Cardiac septum (tissue), 1 donor: ENCODE measurements at regions of chr15 and their contacts with region 1.

Region 1: DNA sequence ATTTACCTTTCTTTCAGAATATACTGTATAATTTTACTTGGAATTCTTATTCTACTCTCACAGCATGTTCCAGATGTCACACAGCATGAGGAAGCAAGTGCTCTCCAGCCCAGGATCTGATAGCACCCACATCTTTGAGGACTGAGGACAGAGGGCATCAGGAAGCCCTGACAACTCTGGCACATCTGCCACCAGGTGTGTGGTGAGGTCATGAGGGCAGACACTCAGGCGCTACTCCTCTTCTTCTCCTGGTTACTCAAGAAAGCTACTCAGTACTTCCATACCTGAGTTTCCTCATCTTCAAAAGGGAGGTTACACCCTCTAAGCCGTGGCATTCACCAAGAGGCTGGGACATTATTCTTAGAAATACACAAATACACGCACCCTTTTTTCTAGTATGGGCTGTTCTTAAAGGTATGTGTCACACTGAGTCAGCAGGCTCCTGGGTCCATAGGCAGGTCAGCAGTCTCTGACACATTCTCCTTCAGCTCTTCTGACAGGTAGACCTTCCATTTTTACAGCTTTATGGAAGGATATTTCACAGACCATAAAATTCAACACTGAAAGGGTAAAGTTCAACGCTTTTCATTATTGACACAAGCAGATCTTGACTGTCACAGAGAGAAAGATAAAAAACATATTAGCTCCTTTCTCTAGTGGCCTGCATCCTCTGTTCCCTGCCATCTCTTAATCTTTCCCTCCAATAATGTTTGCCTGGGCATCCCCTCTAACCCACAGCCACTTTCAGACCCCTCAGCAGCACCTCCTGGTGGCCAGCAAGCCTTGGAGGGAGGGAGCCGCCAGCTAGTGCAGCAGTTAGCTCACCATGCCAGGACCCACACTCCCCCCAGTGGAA is 103.2 kb upstream of the TJP1 start:
- DNase-seq: peak; percentile 85

Region 2: DNA sequence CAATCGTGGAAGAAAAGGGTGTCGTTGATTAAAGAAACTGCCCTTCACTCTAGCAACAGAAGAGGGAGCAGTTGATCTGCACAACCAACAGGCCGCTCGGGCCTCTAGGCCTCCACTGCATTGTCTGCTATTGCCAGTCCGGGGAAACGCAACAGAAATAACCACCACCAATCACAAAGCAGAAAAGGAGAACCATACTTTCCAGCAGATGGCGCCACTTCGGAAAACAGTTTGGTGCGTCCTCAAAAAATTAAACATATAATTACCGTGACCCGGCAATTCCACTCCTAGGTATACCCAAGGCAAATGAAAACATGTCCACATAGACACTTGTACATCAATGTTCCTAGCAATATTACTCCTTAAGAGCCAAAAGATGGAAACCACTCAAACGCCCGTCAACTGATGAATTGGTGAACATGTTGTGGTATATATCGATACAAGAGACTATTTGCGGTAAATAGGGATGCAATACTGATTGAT is 257.3 kb before region 1 on chr15:
- intact Hi-C with region 1: loop called (anchors 5 kb)
- DNase-seq: no peak

Region 3: GRCh38 chr15:29747837-29748417 is 177.5 kb before region 1 on chr15:
- intact Hi-C with region 1: loop called (anchors 2 kb)
- DNase-seq: no peak

Region 4: GRCh38 chr15:29821416-29822131 is 103.9 kb before region 1 on chr15:
- intact Hi-C with region 1: loop called (anchors 5 kb)
- DNase-seq: peak; percentile 86

Region 5: DNA sequence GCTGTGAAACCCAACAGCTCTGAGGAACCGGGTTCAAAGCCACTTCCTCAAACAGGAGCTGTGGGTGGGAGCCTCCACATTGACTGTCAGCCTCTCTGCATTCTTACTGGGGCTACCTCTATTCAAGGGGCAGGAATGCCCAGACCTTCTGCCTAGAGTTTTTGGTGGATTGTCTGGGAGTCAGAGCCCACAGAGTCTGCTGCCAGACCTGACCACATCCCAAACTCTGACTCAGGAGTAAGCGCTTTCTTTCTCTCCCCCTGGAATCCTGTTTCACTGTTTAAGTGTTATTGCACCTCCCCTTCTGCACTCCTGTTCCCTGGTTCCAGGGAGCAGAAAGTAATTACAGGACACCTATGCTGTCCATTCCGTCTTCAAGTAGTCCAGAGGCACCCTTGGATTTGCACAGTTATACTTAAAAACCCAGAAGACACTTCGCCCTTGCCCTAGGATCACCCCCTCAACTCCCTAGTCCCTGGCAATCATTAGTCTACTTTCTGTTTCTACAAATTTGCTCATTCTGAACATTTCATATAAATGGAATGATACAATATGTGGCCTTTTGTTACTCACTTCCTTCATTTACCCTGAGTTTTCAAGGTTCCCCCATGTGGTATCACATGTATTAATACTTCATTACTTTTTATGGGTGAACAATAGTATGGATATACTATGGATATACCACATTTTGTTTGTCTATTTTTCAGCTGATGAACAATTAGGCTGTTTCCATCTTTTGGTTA is 65.3 kb before region 1 on chr15:
- intact Hi-C with region 1: no loop called
- DNase-seq: no peak